PC-3 (cell line): ENCODE measurements at regions of chr1 and their contacts with region 1.

Region 1: GRCh38 chr1:205172729-205173366 is 38.7 kb downstream of the DSTYK start:
- DNase-seq: peak; percentile 98
- ATAC-seq: peak; percentile 83
- H3K4me3 ChIP-seq: no peak overlapping the region
- H3K27ac ChIP-seq: peak overlapping the region; percentile 76
- H3K4me1 ChIP-seq: peaks cover 33% of the 10 kb centered on the region
- H3K27me3 ChIP-seq: no peaks in the 10 kb centered on the region
- CTCF ChIP-seq: no peak

Region 2: GRCh38 chr1:205111354-205111753 is 61.5 kb before region 1 on chr1:
- CTCF ChIA-PET with region 1: no interaction called
- POLR2A ChIA-PET with region 1: no interaction called
- intact Hi-C with region 1: no loop called
- DNase-seq: no peak
- ATAC-seq: no peak
- H3K4me3 ChIP-seq: no peak overlapping the region
- H3K27ac ChIP-seq: no peak overlapping the region
- H3K4me1 ChIP-seq: no peaks in the 10 kb centered on the region
- H3K27me3 ChIP-seq: no peaks in the 10 kb centered on the region
- CTCF ChIP-seq: no peak

Region 3: GRCh38 chr1:205121660-205122488 is 51.0 kb before region 1 on chr1 and contains the start of gene RBBP5:
- CTCF ChIA-PET with region 1: no interaction called
- POLR2A ChIA-PET with region 1: no interaction called
- intact Hi-C with region 1: loop called (anchors 1 kb)
- DNase-seq: peak; percentile 99
- ATAC-seq: peak; percentile 98
- H3K4me3 ChIP-seq: peak within 1 kb of the TSS; percentile 73
- H3K27ac ChIP-seq: peak within 1 kb of the TSS; percentile 72
- H3K4me1 ChIP-seq: peaks cover 24% of the 10 kb centered on the region
- H3K27me3 ChIP-seq: no peaks in the 10 kb centered on the region
- CTCF ChIP-seq: peak; percentile 98
- total RNA-seq, gene RBBP5: 39.5 and 41.7 TPM in 2 replicates

Region 4: DNA sequence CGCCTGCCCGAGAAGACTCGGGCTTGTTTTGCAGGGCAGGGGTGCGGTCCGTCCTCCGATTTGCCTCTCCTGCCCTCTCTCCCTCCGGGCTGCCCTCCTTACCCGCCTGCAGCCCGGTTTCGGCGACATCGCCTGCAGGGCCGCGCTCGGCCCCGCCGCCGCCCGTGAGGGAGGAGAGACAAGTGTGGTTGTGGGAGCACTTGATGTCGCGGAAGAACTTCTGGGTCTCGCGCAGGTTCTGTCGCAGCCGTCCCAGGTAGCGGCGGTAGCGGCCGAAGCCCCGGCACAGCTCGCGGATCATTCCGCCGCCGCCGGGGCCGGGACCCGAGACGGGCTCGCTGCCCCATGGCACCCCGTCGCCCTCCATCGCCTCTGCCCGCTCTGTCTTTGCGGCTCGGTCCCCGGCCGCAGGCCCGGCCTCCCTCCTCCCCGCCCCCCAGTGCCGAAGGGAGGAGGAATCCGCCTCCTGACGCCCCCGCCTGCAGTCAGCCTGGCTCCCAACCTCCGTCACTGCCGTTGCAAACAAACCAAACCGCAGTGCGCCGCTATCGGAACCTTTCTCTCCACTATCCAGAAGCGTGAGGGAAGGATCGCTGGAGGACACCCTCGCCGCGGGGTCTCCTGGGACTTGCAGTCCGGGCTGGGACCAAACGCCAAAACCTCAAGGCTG is 38.5 kb after region 1 on chr1 and contains the start of gene DSTYK:
- CTCF ChIA-PET with region 1: no interaction called
- POLR2A ChIA-PET with region 1: no interaction called
- intact Hi-C with region 1: loop called (anchors 1 kb)
- DNase-seq: peak; percentile 97
- ATAC-seq: peak; percentile 90
- H3K4me3 ChIP-seq: peak within 1 kb of the TSS; percentile 89
- H3K27ac ChIP-seq: peak within 1 kb of the TSS; percentile 71
- H3K4me1 ChIP-seq: peaks cover 10% of the 10 kb centered on the region; the same call in 1 of the 2 replicates
- H3K27me3 ChIP-seq: no peaks in the 10 kb centered on the region
- CTCF ChIP-seq: no peak
- total RNA-seq, gene DSTYK: 8.4 and 9.3 TPM in 2 replicates

Region 5: DNA sequence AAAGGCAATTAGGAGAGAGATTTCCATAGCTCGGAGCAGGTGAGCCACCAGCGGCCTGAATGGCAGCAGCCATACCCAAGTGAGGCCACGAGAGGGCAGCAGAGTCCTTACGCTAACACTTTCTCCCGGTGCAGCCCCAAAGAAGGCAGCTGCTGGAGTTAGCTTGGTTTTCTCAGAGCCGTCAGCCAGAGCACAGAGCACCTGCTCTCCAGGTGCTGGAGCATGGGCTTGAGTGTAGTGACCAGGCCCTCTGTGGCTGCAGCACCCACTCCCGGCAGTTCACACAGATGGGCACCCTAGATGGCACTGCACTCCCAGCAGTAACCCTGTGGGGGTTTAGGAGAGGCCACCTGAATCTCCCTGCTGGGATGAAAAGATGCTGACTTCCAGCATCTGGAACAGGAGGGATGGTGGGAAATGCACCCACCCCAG is 100.7 kb after region 1 on chr1:
- CTCF ChIA-PET with region 1: no interaction called
- POLR2A ChIA-PET with region 1: interaction called, 11 read pairs
- intact Hi-C with region 1: no loop called
- DNase-seq: peak; percentile 93
- ATAC-seq: peak; percentile 70
- H3K4me3 ChIP-seq: no peak overlapping the region
- H3K27ac ChIP-seq: no peak overlapping the region
- H3K4me1 ChIP-seq: peaks cover 16% of the 10 kb centered on the region
- H3K27me3 ChIP-seq: no peaks in the 10 kb centered on the region
- CTCF ChIP-seq: peak; percentile 99

Region 6: DNA sequence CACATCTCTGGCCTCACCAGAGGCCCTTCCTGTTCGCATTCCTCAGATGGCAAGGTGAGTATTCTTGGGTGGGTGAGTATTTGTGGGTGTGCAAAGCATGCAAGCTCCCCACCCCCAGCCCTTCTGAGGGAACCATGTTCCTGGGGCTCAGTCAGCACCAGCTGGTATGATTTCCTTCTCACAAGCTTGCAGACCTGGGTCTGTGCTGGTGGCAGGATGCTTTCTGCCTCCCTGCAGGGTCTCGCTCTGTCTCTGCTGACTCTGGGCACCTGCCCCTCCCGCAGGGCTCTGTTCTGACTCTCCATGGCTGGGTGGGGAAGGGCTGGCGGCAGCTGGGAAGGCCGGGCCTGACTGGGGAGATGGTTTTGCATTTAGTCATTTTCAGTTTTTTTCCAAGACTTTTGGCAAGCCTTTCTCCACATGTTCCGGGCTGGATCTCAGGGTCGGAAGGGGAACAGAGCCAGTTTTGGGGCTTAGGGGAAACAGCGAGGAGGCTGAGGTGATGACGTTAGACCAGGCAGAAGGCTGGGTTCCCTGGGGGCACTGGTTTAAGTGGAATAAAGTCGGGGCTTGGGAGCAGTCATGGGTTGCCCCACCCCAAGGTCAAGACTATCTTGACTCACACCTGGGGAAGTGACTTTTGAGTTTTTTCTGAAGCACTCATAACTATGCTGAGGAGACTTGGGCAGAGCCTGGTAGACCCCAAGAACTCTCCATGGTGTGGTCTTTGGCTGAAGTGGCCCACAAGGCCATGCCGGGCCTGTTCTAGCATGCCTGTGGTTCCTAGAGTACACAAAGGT is 1340.7 kb after region 1 on chr1:
- CTCF ChIA-PET with region 1: no interaction called
- POLR2A ChIA-PET with region 1: interaction called, 11 read pairs
- intact Hi-C with region 1: no loop called
- DNase-seq: peak; percentile 98
- ATAC-seq: peak; percentile 93
- H3K4me3 ChIP-seq: peak overlapping the region; percentile 28; the same call in 1 of the 2 replicates
- H3K27ac ChIP-seq: peak overlapping the region; percentile 78
- H3K4me1 ChIP-seq: peaks cover 38% of the 10 kb centered on the region
- H3K27me3 ChIP-seq: no peaks in the 10 kb centered on the region
- CTCF ChIP-seq: no peak